Sciatic nerve (tissue), 2 donors: ENCODE measurements at regions of chr5 and their contacts with region 1.

Region 1: DNA sequence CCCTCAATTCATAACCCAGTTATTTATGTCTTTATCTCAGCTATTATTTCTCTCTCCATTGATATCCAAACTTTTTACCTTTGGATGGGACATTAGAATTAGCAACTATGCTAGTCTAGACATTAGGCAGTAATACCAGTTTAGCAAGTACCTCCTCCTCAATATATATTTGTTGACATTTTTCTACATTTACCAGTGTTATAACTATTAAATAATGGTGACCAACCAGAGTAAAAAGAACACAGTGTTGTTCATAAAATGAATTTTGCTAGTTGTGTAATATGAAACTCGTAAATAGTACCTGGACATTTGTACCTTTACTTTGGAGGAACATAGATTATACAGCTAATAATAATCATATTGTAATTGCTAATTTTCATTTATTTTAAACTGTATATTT is 554.6 kb upstream of the CDH6 start:
- DNase-seq: no peak
- ATAC-seq: no peak

Region 2: GRCh38 chr5:31809050-31809870 is 1170.4 kb after region 1 on chr5:
- intact Hi-C with region 1: loop called (anchors 5 kb)
- DNase-seq: peak; percentile 79
- ATAC-seq: peak; percentile 92